PC-9 (cell line): ENCODE measurements at regions of chr13 and their contacts with region 1.

Region 1: DNA sequence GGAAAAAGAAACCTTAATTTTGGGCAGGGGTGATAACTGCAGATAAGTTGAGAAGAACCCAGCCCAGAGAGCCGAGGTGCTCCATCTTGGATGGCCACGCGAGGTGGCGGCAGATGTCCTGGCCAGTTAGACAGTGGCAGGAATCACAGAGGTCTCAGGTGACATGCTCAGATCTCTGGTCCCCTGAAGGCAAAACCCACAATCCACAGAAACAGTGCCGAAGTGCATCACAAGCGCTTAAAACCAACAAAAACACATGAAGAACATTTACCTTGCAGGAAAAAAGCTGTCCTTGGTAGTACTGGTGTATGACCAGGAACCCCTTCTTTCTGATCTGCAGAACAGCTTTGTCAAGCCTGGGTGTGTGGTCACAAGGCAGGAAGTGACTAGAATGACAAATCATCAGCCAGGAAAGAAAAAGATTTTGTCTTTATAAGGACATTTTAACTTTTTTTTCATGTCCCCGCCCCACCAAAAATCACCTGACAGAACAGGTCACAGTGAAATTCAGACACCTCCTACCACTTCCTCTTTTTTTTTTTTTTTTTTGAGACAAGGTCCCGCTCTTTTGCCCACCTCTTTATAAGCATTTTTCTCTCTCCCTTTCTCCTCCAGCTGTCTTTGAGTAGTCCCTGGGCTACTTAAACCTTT is at the start of gene LCP1:
- DNase-seq: peak; percentile 62 to 87
- H3K4me3 ChIP-seq: peak within 1 kb of the TSS; percentile 72
- H3K27ac ChIP-seq: peak within 1 kb of the TSS; percentile 94
- H3K4me1 ChIP-seq: peaks cover 36% of the 10 kb centered on the region
- H3K27me3 ChIP-seq: no peaks in the 10 kb centered on the region
- CTCF ChIP-seq: no peak
- total RNA-seq, gene LCP1: 131 and 197 TPM in 2 replicates

Region 2: DNA sequence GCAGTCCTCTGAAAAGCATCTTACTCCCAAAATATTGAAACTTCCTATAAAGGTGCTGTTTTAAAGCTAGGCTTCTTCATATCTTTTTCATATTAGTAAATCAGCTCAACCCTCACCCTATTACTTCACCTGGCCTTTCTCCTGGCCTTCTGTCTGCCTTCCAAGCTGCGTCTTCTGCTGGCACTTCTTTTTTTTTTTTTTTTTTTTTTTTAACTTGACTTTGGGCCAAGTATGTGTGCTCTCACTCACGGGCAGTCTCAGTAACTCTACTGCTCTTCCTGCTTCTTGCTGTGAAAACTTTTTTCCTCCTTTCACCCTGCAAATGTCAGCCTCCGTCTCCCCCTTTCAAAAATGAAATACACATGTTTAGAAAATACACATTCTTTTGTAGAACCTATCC is 939.9 kb before region 1 on chr13:
- CTCF ChIA-PET with region 1: no interaction called
- POLR2A ChIA-PET with region 1: no interaction called
- intact Hi-C with region 1: no loop called
- DNase-seq: peak in 1 of 2 experiments; percentile 23
- H3K4me3 ChIP-seq: no peak overlapping the region
- H3K27ac ChIP-seq: no peak overlapping the region
- H3K4me1 ChIP-seq: no peaks in the 10 kb centered on the region
- H3K27me3 ChIP-seq: no peaks in the 10 kb centered on the region
- CTCF ChIP-seq: no peak

Region 3: GRCh38 chr13:45683701-45684100 is 498.3 kb before region 1 on chr13:
- CTCF ChIA-PET with region 1: no interaction called
- POLR2A ChIA-PET with region 1: interaction called, 15 read pairs
- intact Hi-C with region 1: no loop called
- DNase-seq: no peak
- H3K4me3 ChIP-seq: no peak overlapping the region
- H3K27ac ChIP-seq: no peak overlapping the region
- H3K4me1 ChIP-seq: no peaks in the 10 kb centered on the region
- H3K27me3 ChIP-seq: peaks cover 63% of the 10 kb centered on the region
- CTCF ChIP-seq: no peak

Region 4: DNA sequence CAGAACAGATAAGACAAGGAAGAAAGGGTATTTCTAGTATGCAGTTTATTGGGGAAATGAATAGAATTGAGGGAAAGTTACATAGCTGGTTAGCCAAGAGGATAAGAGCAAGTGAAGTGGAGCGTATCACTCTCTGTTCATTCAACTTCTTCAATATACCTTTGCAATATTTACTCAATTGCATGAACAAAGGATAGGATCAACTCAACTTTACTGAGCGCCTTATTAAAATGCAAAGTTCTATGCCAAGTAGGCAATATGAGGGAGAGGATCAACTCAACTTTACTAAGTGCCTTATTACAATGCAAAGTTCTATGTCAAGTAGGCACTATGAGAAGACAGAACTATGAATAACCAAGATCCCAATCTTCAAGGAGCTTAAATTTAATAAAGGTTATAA is 173.3 kb before region 1 on chr13:
- CTCF ChIA-PET with region 1: no interaction called
- POLR2A ChIA-PET with region 1: interaction called, 33 read pairs
- intact Hi-C with region 1: no loop called
- DNase-seq: no peak
- H3K4me3 ChIP-seq: no peak overlapping the region
- H3K27ac ChIP-seq: no peak overlapping the region
- H3K4me1 ChIP-seq: no peaks in the 10 kb centered on the region
- H3K27me3 ChIP-seq: no peaks in the 10 kb centered on the region
- CTCF ChIP-seq: no peak

Region 5: DNA sequence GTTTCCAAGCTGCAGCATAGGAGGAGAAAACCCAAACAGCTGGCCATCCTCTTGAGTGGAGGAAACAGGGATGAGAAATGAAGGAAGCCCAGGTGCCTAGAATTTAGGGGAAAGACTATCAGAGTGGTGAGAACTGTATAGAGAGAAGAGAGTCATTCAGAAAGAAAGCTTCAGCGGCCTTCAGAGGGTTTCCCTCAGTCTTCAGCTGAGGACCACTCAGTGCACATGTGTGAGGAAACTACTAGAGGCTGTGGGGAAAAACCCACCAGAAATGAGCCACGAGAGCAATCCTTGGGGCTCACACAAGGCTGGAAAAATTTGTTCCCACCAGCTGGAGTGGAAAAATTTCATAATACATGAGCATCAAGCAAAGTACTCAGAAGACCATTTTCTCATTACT is 41.9 kb before region 1 on chr13:
- CTCF ChIA-PET with region 1: no interaction called
- POLR2A ChIA-PET with region 1: interaction called, 12 read pairs
- intact Hi-C with region 1: no loop called
- DNase-seq: no peak
- H3K4me3 ChIP-seq: no peak overlapping the region
- H3K27ac ChIP-seq: no peak overlapping the region
- H3K4me1 ChIP-seq: peaks cover 15% of the 10 kb centered on the region
- H3K27me3 ChIP-seq: no peaks in the 10 kb centered on the region
- CTCF ChIP-seq: no peak

Region 6: DNA sequence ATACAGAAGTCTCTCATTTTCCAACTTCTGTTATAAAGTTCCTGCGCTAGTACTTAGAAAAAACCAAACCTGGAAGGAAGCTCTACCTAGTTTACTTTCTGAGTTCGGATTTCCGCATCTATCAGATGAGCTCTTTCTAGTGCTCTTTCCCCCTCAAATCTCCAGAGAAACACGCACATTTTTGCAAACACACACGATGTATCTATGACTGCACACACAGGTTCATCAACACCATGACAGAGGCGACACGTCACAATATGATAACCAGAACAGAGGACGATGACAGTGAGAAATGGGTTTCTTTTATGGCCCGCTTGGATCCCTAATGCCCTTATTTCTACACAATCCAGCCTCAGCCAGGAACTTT is 29.1 kb after region 1 on chr13:
- CTCF ChIA-PET with region 1: interaction called, 7 read pairs
- POLR2A ChIA-PET with region 1: interaction called, 15 read pairs
- intact Hi-C with region 1: no loop called
- DNase-seq: no peak
- H3K4me3 ChIP-seq: peak overlapping the region; percentile 54
- H3K27ac ChIP-seq: no peak overlapping the region
- H3K4me1 ChIP-seq: peaks cover 22% of the 10 kb centered on the region; the same call in 1 of the 2 replicates
- H3K27me3 ChIP-seq: no peaks in the 10 kb centered on the region
- CTCF ChIP-seq: no peak

Region 7: GRCh38 chr13:46278474-46278873 is 96.5 kb after region 1 on chr13:
- CTCF ChIA-PET with region 1: no interaction called
- POLR2A ChIA-PET with region 1: interaction called, 34 read pairs
- intact Hi-C with region 1: no loop called
- DNase-seq: no peak
- H3K4me3 ChIP-seq: no peak overlapping the region
- H3K27ac ChIP-seq: no peak overlapping the region
- H3K4me1 ChIP-seq: no peaks in the 10 kb centered on the region
- H3K27me3 ChIP-seq: no peaks in the 10 kb centered on the region
- CTCF ChIP-seq: no peak